ENCODE measurements at regions of chr16 and their contacts with region 1.

Region 1: DNA sequence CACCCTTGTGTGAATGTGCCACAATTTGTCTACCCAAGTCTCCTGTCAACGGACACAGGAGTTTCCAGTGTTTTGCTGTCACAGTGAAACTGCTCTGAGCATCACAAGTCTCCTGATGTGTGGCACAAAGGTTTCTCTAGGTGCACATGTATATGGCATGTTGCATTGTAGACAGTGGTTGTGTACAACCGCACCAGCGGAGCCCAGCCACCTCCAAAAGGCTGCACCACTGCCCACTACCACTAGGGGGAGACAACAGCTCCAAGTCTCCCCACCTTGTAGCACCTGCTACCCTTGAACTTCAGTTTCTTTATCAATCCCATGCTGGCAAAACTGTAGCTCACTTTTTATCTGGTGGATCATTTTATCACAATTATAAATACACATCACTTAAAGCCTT is 95.5 kb upstream of the ZNF469 start:
- DNase-seq: peak in 1 of 9 experiments; percentile 43
- ATAC-seq: peak; percentile 51
- H3K4me3 ChIP-seq: no peak overlapping the region
- H3K4me3 Mint-ChIP-seq: no peak overlapping the region
- H3K27ac ChIP-seq: no peak overlapping the region
- H3K27ac Mint-ChIP-seq: no peak overlapping the region
- H3K4me1 ChIP-seq: no peaks in the 10 kb centered on the region
- H3K4me1 Mint-ChIP-seq: peaks cover 1% of the 10 kb centered on the region
- H3K27me3 ChIP-seq: no peaks in the 10 kb centered on the region
- H3K27me3 Mint-ChIP-seq: peaks cover 4% of the 10 kb centered on the region
- CTCF ChIP-seq: peak; percentile 58

Region 2: DNA sequence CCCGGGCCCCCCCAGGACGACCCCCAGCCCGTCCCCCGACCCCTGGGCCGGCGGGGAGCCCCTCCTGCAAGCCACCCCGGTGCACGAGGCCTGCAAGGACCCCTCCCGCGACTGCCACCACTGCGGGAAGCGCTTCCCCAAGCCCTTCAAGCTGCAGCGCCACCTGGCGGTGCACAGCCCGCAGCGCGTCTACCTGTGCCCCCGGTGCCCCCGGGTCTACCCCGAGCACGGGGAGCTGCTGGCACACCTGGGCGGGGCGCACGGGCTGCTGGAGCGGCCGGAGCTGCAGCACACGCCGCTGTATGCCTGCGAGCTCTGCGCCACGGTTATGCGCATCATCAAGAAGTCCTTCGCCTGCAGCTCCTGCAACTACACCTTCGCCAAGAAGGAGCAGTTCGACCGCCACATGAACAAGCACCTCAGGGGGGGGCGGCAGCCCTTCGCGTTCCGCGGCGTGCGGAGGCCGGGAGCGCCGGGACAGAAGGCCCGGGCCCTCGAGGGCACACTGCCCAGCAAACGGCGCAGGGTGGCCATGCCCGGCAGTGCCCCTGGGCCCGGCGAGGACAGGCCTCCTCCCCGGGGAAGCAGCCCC is 150.2 kb after region 1 on chr16:
- CTCF ChIA-PET with region 1: interaction called, 7 read pairs
- POLR2A ChIA-PET with region 1: no interaction called
- intact Hi-C with region 1: loop called in 1 of 2 experiments (anchors 2 kb)
- DNase-seq: peak in 8 of 9 experiments; percentile 50 to 79 (median 70)
- ATAC-seq: peak; percentile 94
- H3K4me3 ChIP-seq: no peak overlapping the region
- H3K4me3 Mint-ChIP-seq: no peak overlapping the region
- H3K27ac ChIP-seq: no peak overlapping the region
- H3K27ac Mint-ChIP-seq: no peak overlapping the region
- H3K4me1 ChIP-seq: no peaks in the 10 kb centered on the region
- H3K4me1 Mint-ChIP-seq: no peaks in the 10 kb centered on the region
- H3K27me3 ChIP-seq: no peaks in the 10 kb centered on the region
- H3K27me3 Mint-ChIP-seq: no peaks in the 10 kb centered on the region
- CTCF ChIP-seq: peak; percentile 73

Region 3: DNA sequence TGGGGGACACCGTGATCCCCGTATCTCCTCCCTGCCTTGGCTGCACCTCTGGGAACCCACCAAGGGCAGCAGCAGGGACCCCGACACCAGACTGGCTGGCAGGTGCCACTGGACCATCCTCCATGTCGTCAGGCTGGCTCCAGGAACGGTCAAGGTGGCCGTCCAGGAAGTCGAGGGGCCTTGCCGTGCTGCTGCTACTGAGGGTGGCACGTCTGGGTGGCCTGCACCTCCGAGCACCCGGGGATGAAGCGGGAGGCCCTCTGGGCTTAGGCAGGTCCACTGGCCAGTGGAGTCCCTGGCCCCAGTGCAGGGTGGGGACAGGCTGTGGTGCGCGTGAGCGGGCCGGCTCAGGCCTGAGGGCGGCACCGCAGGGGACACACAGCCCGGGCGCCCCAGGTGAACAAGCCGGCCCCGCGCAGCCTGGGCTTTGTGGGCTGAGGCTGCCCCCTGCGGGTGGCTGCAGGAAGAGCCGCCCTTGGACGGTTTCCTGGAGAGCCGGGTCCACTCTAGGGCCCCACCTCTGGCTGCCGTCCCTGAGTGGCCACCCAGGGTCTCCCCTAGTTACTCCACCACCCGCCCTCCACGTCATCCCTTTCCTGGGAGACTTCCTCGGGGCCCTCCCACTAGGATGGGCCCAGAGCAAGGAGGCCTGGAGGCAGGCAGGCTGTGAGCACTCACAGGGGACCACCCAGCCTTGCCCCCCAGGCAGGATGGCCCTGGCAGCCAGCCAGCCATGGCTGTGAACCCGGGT is 240.1 kb after region 1 on chr16:
- CTCF ChIA-PET with region 1: no interaction called
- POLR2A ChIA-PET with region 1: no interaction called
- intact Hi-C with region 1: loop called in 1 of 2 experiments (anchors 2 kb)
- DNase-seq: peak; percentile 41 to 81 (median 60)
- ATAC-seq: peak; percentile 54
- H3K4me3 ChIP-seq: no peak overlapping the region
- H3K4me3 Mint-ChIP-seq: no peak overlapping the region
- H3K27ac ChIP-seq: no peak overlapping the region
- H3K27ac Mint-ChIP-seq: no peak overlapping the region
- H3K4me1 ChIP-seq: no peaks in the 10 kb centered on the region
- H3K4me1 Mint-ChIP-seq: peaks cover 6% of the 10 kb centered on the region
- H3K27me3 ChIP-seq: no peaks in the 10 kb centered on the region
- H3K27me3 Mint-ChIP-seq: no peaks in the 10 kb centered on the region
- CTCF ChIP-seq: peak; percentile 83